Thyroid gland (tissue), 4 donors: ENCODE measurements at regions of chr20 and their contacts with region 1.

Region 1: DNA sequence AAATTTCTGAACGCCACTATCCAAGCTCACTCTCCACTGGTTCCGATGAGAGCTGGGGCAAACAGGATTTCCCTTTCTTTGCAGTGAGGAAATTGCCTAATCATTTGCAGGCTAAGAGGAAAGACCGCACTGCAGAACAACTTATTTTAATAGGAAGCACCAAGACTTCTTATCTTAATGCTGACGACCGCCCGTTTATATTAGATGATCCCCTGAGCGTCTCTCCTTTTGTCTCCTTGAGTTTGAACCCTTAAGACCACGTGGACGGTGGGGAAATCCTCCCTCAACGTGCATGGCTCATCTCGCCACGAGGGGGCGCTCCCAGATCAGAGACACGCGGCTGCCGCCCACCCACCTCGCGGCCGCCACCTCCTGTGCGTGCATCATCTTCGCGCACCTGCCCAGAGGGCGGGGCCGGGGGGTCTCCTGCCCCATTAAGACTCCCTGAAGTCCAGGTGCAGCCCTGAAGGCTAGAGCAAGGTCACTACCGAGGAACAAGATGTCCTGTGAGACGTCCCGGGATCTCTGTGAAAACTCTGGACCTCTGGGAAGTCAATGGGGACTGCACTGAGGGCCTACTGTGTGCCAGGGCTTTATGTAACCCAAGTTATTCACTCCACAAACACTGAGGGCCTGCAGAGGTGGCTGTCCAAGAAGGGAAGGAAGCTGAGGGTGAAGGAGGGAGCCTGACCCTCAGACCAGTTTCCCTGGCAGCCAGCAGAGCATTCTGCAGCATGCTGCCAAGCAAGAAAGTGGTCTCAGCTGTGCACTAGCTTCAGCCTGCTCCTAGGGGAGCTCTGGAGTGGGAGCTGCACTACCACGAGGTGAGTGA is 28.1 kb downstream of the PDYN start:
- DNase-seq: peak; percentile 59 to 67
- H3K4me3 ChIP-seq: no peak overlapping the region
- H3K27ac ChIP-seq: no peak overlapping the region
- H3K4me1 ChIP-seq: no peaks in the 10 kb centered on the region
- H3K27me3 ChIP-seq: no peaks in the 10 kb centered on the region
- CTCF ChIP-seq: peak; percentile 75 to 91 (median 82)
- POLR2A ChIP-seq: no peak

Region 2: GRCh38 chr20:2101865-2102584 is 136.3 kb after region 1 on chr20:
- intact Hi-C with region 1: loop called (anchors 10 kb)
- DNase-seq: peak; percentile 89 to 94
- H3K4me3 ChIP-seq: peak overlapping the region; percentile 19 to 95 (median 90)
- H3K27ac ChIP-seq: peak overlapping the region; percentile 97 to 100 (median 100)
- H3K4me1 ChIP-seq: peaks cover 27 to 28% of the 10 kb centered on the region in 2 donors
- H3K27me3 ChIP-seq: no peaks in the 10 kb centered on the region
- CTCF ChIP-seq: peak in 2 of 6 experiments; percentile 30 to 33
- POLR2A ChIP-seq: peak in 1 of 2 donors; percentile 45

Region 3: DNA sequence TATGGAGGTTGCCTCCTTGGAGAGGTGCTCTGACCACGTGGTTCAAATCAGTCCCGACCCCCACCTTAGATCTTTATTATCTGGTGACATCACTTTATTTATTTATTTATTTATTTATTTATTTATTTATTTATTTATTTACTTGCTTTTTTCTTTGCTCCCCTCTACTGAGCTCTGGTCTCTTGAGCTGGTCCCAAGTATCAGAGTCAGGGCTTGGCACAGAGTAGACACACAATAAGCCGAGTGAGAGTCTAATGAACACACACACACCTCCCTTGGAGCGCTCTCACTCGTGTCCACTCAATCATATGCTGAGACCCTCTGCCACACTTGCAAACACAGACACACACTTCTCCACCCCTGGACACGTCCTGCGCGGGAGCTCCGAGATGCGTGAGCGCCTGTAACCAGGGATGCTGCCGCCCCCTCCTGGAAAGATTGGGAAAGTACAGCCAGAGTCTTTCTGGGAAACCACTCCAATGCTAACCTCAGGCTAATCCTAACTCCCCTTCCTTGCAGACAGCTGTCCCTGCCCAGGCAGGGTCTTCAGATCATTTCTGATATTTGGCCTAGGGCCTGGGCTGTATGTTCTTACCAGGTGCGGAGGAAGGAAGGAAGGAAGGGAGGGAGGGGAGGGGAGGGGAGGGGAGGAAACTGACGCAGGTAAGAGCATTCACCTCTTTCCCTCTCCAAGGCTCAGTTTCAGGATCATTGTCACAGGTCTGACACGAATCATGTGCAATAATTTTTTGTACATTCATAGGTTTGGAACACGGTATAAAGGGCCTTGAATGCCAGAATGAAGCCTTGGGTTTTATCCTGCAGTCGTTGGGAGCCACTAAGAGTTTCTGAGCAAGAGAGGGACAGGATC is 206.8 kb after region 1 on chr20:
- intact Hi-C with region 1: loop called (anchors 5 kb)
- DNase-seq: peak; percentile 65 to 71
- H3K4me3 ChIP-seq: no peak overlapping the region
- H3K27ac ChIP-seq: no peak overlapping the region
- H3K4me1 ChIP-seq: no peaks in the 10 kb centered on the region
- H3K27me3 ChIP-seq: no peaks in the 10 kb centered on the region
- CTCF ChIP-seq: peak; percentile 67 to 90 (median 84)
- POLR2A ChIP-seq: no peak